Thyroid gland (tissue), 4 donors: ENCODE measurements at regions of chr10 and their contacts with region 1.

Region 1: DNA sequence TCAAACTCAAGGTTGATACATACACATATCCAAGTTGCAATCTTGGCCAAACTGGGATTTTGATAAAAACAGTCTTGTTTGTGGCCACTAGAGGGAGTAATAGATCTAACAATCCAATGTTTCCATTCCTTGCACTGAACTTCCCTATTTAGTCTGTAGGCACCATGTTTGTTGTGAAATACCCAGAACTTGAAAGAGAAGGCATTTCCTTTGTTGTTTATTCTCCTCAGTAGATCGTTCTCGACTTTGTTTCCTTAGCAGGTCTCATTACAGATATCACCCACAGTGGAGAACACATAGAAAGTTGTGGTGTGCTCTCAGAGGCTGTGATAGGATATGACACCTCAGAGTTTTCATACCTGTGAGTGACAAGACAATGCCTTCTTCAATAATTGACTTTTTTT is 70.3 kb upstream of the MXI1 start:
- DNase-seq: no peak
- H3K4me3 ChIP-seq: no peak overlapping the region
- H3K27ac ChIP-seq: peak overlapping the region in 2 of 3 donors; percentile 64 to 66
- H3K4me1 ChIP-seq: peaks cover 25 to 43% of the 10 kb centered on the region in 2 donors
- H3K27me3 ChIP-seq: no peaks in the 10 kb centered on the region
- CTCF ChIP-seq: peak; percentile 70 to 97 (median 80)
- POLR2A ChIP-seq: no peak

Region 2: GRCh38 chr10:109894516-109894915 is 242.6 kb before region 1 on chr10:
- intact Hi-C with region 1: loop called (anchors 5 kb)
- DNase-seq: peak; percentile 34 to 45
- H3K4me3 ChIP-seq: no peak overlapping the region
- H3K27ac ChIP-seq: peak overlapping the region; percentile 63 to 87 (median 81)
- H3K4me1 ChIP-seq: peaks cover 64 to 93% of the 10 kb centered on the region in 2 donors
- H3K27me3 ChIP-seq: no peaks in the 10 kb centered on the region
- CTCF ChIP-seq: no peak
- POLR2A ChIP-seq: no peak

Region 3: GRCh38 chr10:110036640-110037039 is 100.5 kb before region 1 on chr10:
- intact Hi-C with region 1: no loop called
- DNase-seq: no peak
- H3K4me3 ChIP-seq: no peak overlapping the region
- H3K27ac ChIP-seq: no peak overlapping the region
- H3K4me1 ChIP-seq: peaks cover 27 to 32% of the 10 kb centered on the region in 2 donors
- H3K27me3 ChIP-seq: no peaks in the 10 kb centered on the region
- CTCF ChIP-seq: no peak
- POLR2A ChIP-seq: no peak

Region 4: GRCh38 chr10:110210674-110211464 is 73.7 kb after region 1 on chr10:
- intact Hi-C with region 1: loop called (anchors 5 kb)
- DNase-seq: peak; percentile 95 to 96
- H3K4me3 ChIP-seq: peak overlapping the region; percentile 63 to 87 (median 76)
- H3K27ac ChIP-seq: peak overlapping the region; percentile 32 to 87 (median 67)
- H3K4me1 ChIP-seq: peaks cover 6 to 11% of the 10 kb centered on the region in 2 donors
- H3K27me3 ChIP-seq: no peaks in the 10 kb centered on the region
- CTCF ChIP-seq: peak in 2 of 6 experiments; percentile 8
- POLR2A ChIP-seq: peak in 1 of 2 donors; percentile 70

Region 5: DNA sequence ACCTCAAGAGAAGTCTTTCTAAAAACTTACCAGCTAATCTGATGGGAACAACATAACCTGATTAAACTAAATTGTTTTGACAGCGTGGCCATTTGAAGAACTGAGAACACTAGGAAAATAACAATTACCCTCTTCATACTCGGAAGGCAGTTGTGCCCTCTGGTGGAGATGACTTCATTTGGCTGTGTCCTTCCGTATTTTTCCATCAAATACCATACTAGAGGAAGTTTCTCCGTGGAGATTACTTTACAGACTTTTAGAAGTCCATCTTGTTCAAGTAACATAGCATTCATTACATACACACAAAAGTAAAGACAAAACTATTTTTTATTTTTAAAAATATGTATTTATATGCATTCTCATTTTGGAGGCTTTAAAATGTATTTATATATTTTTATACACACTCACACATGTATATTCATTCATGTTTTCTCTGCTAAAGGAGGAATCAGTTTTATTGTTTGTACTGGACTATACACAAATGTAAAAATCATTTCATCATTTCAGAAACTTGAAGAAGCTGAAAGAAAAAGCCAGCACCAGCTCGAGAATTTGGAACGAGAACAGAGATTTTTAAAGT is 142.4 kb after region 1 on chr10:
- intact Hi-C with region 1: loop called (anchors 5 kb)
- DNase-seq: peak; percentile 69 to 71
- H3K4me3 ChIP-seq: no peak overlapping the region
- H3K27ac ChIP-seq: peak overlapping the region; percentile 39 to 62 (median 58)
- H3K4me1 ChIP-seq: peaks cover 9 to 22% of the 10 kb centered on the region in 2 donors
- H3K27me3 ChIP-seq: no peaks in the 10 kb centered on the region
- CTCF ChIP-seq: peak; percentile 56 to 92 (median 76)
- POLR2A ChIP-seq: no peak

Region 6: DNA sequence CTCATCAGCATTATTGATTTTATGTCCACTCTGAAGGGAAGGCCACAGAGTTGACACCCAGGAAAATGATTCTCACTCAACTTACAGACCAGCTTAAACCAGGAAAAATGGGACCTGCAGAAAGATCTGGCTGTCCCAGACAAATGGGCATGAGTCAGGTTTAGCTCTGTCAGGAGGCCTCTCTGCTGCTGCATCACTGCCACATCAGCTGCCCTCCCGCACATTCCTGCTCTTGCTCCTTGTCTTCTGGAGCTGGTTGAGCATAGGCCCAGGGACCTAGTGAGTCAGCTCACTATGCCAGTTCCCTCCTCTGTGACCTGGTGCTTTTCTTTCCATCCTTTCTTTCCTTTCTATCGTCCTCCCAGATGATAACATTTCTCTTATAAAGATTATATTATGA is 186.4 kb after region 1 on chr10:
- intact Hi-C with region 1: no loop called
- DNase-seq: no peak
- H3K4me3 ChIP-seq: no peak overlapping the region
- H3K27ac ChIP-seq: no peak overlapping the region
- H3K4me1 ChIP-seq: no peaks in the 10 kb centered on the region
- H3K27me3 ChIP-seq: no peaks in the 10 kb centered on the region
- CTCF ChIP-seq: no peak
- POLR2A ChIP-seq: no peak